HepG2 (cell line): ENCODE measurements at regions of chr1 and their contacts with region 1.

Region 1: GRCh38 chr1:26938004-26938658 is 16.6 kb downstream of the NUDC start:
- DNase-seq: peak; percentile 98
- ATAC-seq: peak; percentile 97
- H3K4me3 ChIP-seq: peak overlapping the region in 1 of 3 experiments; percentile 19; a peak in 2 of 6 replicates
- H3K27ac ChIP-seq: peak overlapping the region; percentile 84
- H3K4me1 ChIP-seq: peaks cover 51% of the 10 kb centered on the region
- H3K27me3 ChIP-seq: no peaks in the 10 kb centered on the region
- CTCF ChIP-seq: peak; percentile 48
- EP300 ChIP-seq: peak in 1 of 2 experiments; percentile 88; a peak in 2 of 4 replicates
- POLR2A ChIP-seq: peak; percentile 25 to 51; a peak in 2 of 4 replicates
- RAD21 ChIP-seq: no peak; the same call in 1 of the 2 replicates

Region 2: GRCh38 chr1:26900001-26900814 is 37.9 kb before region 1 on chr1 and contains the start of gene GPATCH3:
- CTCF ChIA-PET with region 1: no interaction called
- POLR2A ChIA-PET with region 1: interaction called, 17 read pairs
- in situ Hi-C with region 1: no loop called
- intact Hi-C with region 1: loop called (anchors 5 kb)
- DNase-seq: peak; percentile 88
- ATAC-seq: peak; percentile 89
- H3K4me3 ChIP-seq: peak within 1 kb of the TSS; percentile 76 to 94 (median 89)
- H3K27ac ChIP-seq: peak within 1 kb of the TSS; percentile 89
- H3K4me1 ChIP-seq: peaks cover 47% of the 10 kb centered on the region
- H3K27me3 ChIP-seq: no peaks in the 10 kb centered on the region; a peak in 1 of 5 replicates
- CTCF ChIP-seq: no peak
- EP300 ChIP-seq: peak in 1 of 2 experiments; percentile 36; a peak in 1 of 4 replicates
- POLR2A ChIP-seq: peak; percentile 79 to 98
- RAD21 ChIP-seq: no peak; the same call in none of the 2 replicates
- total RNA-seq, gene GPATCH3: 11.0 and 12.5 TPM in 2 replicates

Region 3: GRCh38 chr1:26921540-26922430 is 16.3 kb before region 1 on chr1 and contains the start of gene NUDC:
- CTCF ChIA-PET with region 1: no interaction called
- POLR2A ChIA-PET with region 1: interaction called, 371 read pairs
- in situ Hi-C with region 1: no loop called
- intact Hi-C with region 1: no loop called
- DNase-seq: peak; percentile 93
- ATAC-seq: peak; percentile 97
- H3K4me3 ChIP-seq: peak within 1 kb of the TSS; percentile 64 to 98 (median 82)
- H3K27ac ChIP-seq: peak within 1 kb of the TSS; percentile 77
- H3K4me1 ChIP-seq: peaks cover 53% of the 10 kb centered on the region
- H3K27me3 ChIP-seq: no peaks in the 10 kb centered on the region; a peak in 1 of 5 replicates
- CTCF ChIP-seq: no peak
- EP300 ChIP-seq: no peak; a peak in 1 of 4 replicates
- POLR2A ChIP-seq: peak; percentile 85 to 92
- RAD21 ChIP-seq: peak; percentile 59
- total RNA-seq, gene NUDC: 104 and 126 TPM in 2 replicates

Region 4: DNA sequence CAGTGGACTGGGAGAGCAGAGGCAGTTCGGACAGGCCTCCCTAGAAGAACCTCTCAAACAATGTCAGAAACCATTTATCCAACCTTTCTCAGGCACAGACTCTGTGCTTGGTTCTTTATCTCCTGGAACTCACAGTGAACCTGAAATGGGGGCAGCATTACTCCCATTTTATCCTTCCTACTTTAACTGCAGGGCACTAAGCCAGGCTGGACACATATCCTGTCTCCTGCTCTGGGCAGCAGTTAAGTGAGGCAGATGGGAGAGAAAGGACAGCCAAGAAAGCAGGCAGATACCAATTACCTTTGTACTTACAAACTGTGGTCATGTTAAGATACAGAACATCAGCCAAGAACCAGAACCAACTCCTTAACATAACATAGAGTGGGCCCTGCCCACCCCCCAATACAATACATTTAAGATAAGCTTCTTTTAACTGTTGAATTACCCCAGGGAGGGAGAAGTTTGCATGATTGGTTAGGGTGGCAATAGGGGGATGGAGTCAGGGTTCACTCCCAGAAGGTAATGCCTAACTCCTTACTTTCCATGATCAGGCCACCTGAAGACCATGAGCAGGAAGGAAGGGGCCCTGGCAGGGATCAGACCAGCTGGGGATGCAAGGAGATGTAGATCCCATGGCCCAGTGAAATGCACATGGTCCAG is 11.3 kb after region 1 on chr1:
- CTCF ChIA-PET with region 1: no interaction called
- POLR2A ChIA-PET with region 1: interaction called, 20 read pairs
- in situ Hi-C with region 1: no loop called
- intact Hi-C with region 1: no loop called
- DNase-seq: no peak
- ATAC-seq: no peak
- H3K4me3 ChIP-seq: no peak overlapping the region
- H3K27ac ChIP-seq: peak overlapping the region; percentile 63
- H3K4me1 ChIP-seq: peaks cover 68% of the 10 kb centered on the region
- H3K27me3 ChIP-seq: no peaks in the 10 kb centered on the region
- CTCF ChIP-seq: no peak
- EP300 ChIP-seq: no peak
- POLR2A ChIP-seq: no peak
- RAD21 ChIP-seq: no peak

Region 5: DNA sequence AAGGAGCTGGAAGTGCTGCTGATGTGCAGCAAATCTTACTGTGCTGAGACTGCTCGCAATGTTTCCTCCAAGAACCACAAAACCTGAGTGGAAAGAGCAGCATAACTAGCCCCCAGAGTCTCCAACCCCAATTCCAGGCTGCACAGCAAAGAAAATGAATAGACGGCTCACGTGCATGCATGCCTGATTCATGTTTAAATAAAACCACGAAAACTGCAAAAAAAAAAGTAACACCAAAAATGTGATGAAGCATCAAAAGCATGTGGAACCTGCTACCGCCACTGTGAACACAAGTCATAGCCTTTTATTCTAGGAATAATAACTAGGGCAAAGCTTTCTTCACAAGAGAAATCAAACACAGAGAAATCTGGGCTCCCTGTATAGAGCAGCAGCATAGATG is 45.7 kb after region 1 on chr1:
- CTCF ChIA-PET with region 1: no interaction called
- POLR2A ChIA-PET with region 1: no interaction called
- in situ Hi-C with region 1: no loop called
- intact Hi-C with region 1: no loop called
- DNase-seq: no peak
- ATAC-seq: no peak
- H3K4me3 ChIP-seq: no peak overlapping the region
- H3K27ac ChIP-seq: no peak overlapping the region
- H3K4me1 ChIP-seq: peaks cover 42% of the 10 kb centered on the region
- H3K27me3 ChIP-seq: no peaks in the 10 kb centered on the region
- CTCF ChIP-seq: no peak
- EP300 ChIP-seq: no peak
- POLR2A ChIP-seq: no peak
- RAD21 ChIP-seq: no peak

Region 6: DNA sequence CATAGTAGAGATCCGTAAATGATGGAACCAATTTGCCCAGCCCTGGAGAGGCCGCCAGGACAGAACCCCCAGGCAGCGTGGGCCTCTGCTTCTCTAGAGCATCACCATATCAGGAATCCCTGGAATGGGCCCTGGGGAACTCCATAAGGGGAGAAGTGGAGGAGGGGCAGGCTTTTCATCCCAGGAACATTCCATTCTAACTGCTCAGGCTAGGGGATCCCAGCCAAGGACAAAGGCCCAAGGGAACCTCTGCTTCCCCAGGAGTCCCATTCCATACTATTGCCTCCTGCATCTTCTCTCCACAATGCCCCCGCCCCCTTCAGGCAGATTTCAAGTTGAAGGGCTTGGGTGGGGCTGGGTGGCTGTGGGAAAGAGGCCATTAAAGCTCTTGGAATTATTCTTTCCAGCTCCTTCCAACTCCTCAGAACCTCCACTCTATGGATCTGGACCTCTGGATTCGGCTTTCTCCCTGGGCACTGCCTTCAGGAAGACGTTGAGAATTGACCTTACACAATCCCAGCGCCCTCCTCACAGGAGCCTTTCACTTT is 61.4 kb after region 1 on chr1:
- CTCF ChIA-PET with region 1: no interaction called
- POLR2A ChIA-PET with region 1: interaction called, 17 read pairs
- in situ Hi-C with region 1: no loop called
- intact Hi-C with region 1: loop called (anchors 1 kb)
- DNase-seq: peak; percentile 77
- ATAC-seq: peak; percentile 3; the same call in 1 of the 3 replicates
- H3K4me3 ChIP-seq: no peak overlapping the region
- H3K27ac ChIP-seq: no peak overlapping the region
- H3K4me1 ChIP-seq: peaks cover 91% of the 10 kb centered on the region
- H3K27me3 ChIP-seq: no peaks in the 10 kb centered on the region; a peak in 1 of 5 replicates
- CTCF ChIP-seq: no peak
- EP300 ChIP-seq: no peak
- POLR2A ChIP-seq: peak in 1 of 2 experiments; percentile 33; a peak in 1 of 4 replicates
- RAD21 ChIP-seq: no peak

Region 7: DNA sequence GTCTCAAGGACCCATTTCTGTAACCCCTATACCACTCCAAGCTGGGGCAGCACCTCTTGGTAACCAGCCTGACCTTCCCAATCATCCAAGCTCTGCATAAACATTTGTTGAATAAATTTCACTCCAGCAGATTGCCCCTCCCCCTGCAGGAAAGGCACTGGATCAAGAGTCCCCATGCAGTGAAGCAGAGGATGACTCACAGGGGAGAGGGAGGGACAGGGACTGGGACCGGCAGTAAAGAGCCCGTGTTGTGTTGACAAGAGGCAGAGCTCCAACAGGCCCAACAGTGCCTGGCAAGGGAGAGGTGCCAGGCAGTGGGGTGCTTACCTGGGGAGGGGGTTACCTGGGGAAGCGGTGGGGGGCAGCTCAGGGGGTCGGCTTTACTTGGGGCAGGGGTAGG is 184.5 kb after region 1 on chr1:
- CTCF ChIA-PET with region 1: no interaction called
- POLR2A ChIA-PET with region 1: no interaction called
- in situ Hi-C with region 1: no loop called
- intact Hi-C with region 1: no loop called
- DNase-seq: peak; percentile 86
- ATAC-seq: peak; percentile 97
- H3K4me3 ChIP-seq: no peak overlapping the region
- H3K27ac ChIP-seq: no peak overlapping the region
- H3K4me1 ChIP-seq: peaks cover 14% of the 10 kb centered on the region
- H3K27me3 ChIP-seq: no peaks in the 10 kb centered on the region
- CTCF ChIP-seq: no peak
- EP300 ChIP-seq: no peak
- POLR2A ChIP-seq: no peak
- RAD21 ChIP-seq: no peak